Activated CD4-positive, alpha-beta T cell treated with anti-CD3 and anti-CD28 coated beads, Interleukin-2, amount 10 ng/mL, durations not matched to agents 24 days and 14 days (primary cell): ENCODE measurements at regions of chr15 and their contacts with region 1.

Region 1: DNA sequence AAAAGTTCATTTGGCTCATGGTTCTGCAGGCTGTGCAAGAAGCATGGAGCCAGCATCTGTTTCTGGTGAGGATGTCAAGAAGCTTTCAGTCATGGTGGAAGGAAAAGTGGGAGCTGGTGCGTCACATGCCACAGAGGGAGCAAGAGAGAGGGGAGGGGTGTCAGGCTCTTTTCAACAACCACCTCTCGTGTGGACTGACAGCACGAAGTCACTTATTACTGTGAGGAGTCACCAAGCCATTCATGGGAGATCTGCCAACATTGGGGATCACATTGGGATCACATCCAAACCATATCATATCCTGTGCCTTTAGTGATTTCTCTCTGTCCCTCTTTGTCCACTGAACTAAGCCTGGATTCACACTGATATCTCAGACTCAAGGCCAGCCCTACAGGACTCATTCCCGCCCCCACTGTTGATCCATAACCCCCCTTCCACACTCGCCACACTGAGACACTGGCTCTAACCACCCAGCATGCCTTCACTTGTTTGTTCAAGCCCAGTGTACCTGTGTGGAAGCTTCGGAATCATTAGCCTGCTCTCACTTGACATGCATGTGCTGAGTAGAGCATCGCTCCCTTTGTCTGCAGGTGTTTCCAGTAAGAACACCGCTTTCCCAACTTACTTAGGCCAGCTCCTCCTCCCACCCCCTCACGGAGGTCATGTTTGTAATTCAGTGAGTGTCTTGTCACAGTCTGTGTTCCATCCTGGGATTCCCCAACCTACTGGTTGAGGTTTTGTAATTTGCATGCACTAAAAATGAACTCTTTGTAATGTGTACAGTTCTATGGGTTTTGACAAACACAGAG is 132.2 kb downstream of the KLF13 start:
- DNase-seq: peak; percentile 85
- H3K4me3 Mint-ChIP-seq: peak overlapping the region; percentile 81
- H3K27ac Mint-ChIP-seq: peak overlapping the region; percentile 96
- H3K4me1 Mint-ChIP-seq: peaks cover 28% of the 10 kb centered on the region
- H3K27me3 Mint-ChIP-seq: no peaks in the 10 kb centered on the region

Region 2: GRCh38 chr15:31344823-31345605 is 113.8 kb before region 1 on chr15:
- intact Hi-C with region 1: loop called (anchors 1 kb)
- DNase-seq: peak; percentile 76
- H3K4me3 Mint-ChIP-seq: peak overlapping the region; percentile 95
- H3K27ac Mint-ChIP-seq: peak overlapping the region; percentile 99
- H3K4me1 Mint-ChIP-seq: peaks cover 91% of the 10 kb centered on the region
- H3K27me3 Mint-ChIP-seq: no peaks in the 10 kb centered on the region

Region 3: DNA sequence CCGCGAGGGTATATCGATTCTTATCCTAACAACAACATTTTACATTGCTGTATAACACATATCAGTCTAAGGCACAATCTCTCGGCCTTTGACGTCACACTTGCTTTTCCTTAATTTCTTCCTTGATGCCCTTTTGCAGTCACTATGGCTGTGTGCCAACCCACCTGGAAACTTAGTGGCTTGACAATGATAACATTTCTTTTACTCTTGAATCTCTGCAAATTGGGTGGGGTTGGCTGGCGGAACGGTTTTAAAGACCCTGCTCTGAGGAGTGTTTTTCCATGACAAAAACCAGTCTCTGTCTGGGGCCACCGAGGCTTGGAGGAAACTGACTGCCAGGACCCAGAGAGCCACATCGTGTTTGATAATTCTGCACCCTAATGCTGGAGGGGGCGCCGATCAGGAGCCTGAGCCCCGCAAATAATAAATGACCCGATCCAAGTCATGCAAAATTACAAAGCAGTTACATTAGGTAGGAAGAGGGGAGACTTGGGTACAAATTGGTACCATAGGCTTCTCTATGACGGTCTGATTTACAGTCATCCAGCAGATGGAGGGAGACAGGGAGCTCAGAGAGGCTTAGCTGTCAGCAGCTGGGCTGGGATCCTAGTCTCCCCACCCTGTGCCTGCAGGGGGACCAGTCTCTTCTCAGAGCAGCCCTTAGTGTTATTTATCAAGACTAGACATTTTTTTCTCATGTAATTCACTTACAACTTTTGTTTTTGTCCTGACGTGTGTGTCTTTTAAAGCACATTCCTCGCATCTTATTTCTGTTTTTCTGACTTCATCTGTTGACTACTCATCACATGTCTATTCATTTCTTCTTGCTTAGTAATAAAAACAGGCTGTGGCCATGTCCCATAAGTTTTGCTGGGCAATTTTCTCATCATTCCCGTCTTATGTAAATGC is 16.3 kb before region 1 on chr15:
- intact Hi-C with region 1: loop called (anchors 1 kb)
- DNase-seq: no peak
- H3K4me3 Mint-ChIP-seq: peak overlapping the region; percentile 82
- H3K27ac Mint-ChIP-seq: peak overlapping the region; percentile 57
- H3K4me1 Mint-ChIP-seq: peaks cover 41% of the 10 kb centered on the region
- H3K27me3 Mint-ChIP-seq: no peaks in the 10 kb centered on the region

Region 4: DNA sequence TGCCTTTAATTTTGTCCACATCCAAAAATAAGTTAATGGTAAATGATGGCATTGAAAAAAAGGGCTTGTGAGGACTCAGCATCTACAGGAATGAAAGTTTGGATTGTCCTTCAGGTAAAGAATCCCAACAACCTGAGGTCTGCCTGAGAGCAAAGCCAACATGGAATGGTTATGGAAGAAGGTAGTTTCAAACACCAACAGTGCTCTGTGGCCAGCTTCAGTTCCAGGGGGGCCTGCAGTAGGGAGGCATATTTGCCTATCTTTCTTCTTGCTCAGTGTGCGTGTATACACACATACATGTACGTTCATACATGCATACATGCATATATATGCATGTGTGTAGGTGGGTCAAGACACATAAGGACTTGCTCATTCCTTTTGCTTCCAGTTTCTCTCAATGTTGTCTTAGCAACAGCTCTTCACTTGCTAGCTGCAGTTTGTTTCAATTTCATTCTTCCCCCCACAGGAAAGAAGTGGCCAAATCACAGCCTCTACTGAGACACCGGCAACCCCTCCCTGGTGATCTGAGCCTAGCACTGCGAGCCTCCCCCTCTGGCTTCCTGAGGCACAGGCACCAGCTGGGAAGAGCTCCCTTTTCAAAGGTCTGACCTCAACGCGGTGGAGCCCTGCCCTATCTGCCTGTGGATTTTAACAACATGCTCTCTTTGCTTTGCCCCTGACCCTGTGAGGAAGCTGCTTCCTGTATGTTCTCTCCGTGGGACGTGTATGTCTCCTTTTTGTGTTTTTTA is 14.0 kb after region 1 on chr15:
- intact Hi-C with region 1: loop called (anchors 1 kb)
- DNase-seq: peak; percentile 93
- H3K4me3 Mint-ChIP-seq: peak overlapping the region; percentile 73
- H3K27ac Mint-ChIP-seq: peak overlapping the region; percentile 90
- H3K4me1 Mint-ChIP-seq: peaks cover 37% of the 10 kb centered on the region
- H3K27me3 Mint-ChIP-seq: no peaks in the 10 kb centered on the region